ENCODE measurements at regions of chr14 and their contacts with region 1.

Region 1: DNA sequence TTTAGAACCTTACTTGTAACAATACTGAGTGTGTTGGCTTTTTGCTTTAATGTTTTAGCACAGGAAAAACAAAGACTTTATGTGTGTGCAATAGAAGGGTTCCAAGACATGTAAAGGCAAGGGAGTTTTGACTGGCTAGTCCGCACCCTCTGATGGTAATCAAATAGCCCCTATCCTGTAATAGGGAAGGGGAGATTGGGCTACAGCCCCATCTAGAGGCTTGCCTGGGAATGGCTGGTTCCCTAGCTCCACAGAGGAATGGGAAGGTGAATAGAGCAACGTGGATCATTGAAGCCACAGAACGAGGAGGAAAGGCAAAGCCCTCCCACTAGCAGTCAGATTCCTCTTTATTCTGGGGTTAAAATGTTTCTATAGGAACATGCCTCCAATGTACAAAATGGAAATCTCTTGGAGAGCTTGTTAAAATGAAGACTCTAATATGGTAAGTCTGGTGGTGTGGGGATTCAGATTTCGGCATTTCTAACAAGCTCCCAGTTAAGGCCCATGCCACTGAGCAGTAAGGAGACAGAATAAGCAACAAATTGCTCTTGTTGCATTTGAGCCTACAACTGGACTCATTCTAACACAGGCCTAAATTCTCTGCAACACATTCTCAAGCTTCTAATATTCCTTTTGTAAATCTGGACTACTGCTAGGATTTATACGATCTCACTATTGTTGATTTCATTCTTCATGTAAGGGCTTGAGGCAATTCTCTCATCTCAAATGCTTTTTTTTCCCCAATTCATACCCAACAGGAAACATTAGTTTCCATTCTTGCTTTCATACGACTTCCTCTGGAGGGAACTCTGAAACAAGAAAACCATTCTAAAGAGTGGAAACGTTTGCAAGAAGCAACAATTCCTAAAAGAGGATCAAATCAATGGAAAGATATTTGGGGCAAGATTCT is 57.1 kb downstream of the NIN start:
- DNase-seq: peak; percentile 29 to 64
- ATAC-seq: peak; percentile 67 to 80 (median 71)
- H3K4me3 ChIP-seq: no peak overlapping the region
- H3K27ac ChIP-seq: peak overlapping the region; percentile 48
- H3K4me1 ChIP-seq: peaks cover 40% of the 10 kb centered on the region
- H3K27me3 ChIP-seq: no peaks in the 10 kb centered on the region
- CTCF ChIP-seq: peak; percentile 75

Region 2: DNA sequence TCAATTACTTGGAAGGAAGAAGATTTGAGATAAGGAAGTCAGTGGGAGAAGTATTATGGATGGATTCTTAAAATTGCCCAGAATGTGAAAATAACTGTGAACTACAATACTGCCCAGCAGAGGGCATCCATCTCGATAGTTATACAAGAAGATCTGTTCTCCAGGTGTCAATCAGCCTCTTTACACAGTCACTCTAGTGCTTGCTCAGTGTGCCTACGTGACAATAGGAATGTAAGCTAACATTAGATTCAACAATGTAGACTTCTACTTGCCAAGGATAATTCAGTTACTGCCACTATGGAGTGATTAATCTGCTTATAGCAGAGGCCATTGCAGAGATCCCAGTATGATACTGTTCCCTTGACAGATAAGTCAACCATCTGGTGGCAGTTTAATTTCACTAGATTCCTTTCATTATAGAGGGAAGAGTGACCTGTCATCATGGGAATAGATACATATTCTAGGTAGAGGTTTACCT is 230.9 kb before region 1 on chr14:
- intact Hi-C with region 1: loop called (anchors 5 kb)
- DNase-seq: no peak
- ATAC-seq: peak; percentile 56 to 71 (median 66)
- H3K4me3 ChIP-seq: no peak overlapping the region
- H3K27ac ChIP-seq: peak overlapping the region; percentile 43
- H3K4me1 ChIP-seq: peaks cover 11% of the 10 kb centered on the region
- H3K27me3 ChIP-seq: no peaks in the 10 kb centered on the region
- CTCF ChIP-seq: peak; percentile 55

Region 3: DNA sequence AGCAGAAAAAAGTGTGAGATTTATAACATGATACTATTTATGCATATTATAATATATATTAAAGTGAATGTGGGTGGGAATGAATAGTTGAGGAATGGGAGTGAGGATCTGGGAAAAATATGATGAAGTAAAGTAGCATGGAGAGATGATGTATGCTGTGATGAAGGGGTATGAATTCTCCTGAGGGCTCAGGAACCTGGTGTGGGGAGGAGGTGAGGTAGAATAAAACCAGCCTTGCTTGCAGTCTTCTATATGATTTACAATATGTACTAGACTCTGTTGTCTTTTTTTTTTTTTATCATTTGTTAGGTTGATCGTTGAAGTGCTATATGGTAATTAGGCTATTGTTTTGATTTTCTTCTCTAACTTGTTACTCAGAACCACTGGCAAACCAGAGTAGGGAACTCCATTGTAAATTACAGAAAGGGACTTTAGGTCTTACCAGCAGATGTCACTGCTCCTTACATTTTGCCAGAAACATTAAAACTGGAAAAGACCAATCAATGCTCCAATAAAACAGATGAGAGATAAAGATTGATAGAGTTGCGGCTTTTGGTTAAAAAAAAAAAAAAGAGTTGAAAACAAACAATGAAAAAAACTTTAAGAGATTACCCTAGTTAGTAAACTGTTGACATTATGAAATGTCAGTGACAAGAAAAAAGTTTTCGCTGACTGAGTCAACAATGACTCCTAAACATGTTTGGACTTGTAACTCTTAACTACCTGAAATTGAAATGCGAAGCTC is 174.0 kb before region 1 on chr14:
- intact Hi-C with region 1: loop called (anchors 5 kb)
- DNase-seq: no peak
- ATAC-seq: peak in 2 of 4 donors; percentile 68 to 88
- H3K4me3 ChIP-seq: no peak overlapping the region
- H3K27ac ChIP-seq: no peak overlapping the region
- H3K4me1 ChIP-seq: no peaks in the 10 kb centered on the region
- H3K27me3 ChIP-seq: no peaks in the 10 kb centered on the region
- CTCF ChIP-seq: peak; percentile 53

Region 4: DNA sequence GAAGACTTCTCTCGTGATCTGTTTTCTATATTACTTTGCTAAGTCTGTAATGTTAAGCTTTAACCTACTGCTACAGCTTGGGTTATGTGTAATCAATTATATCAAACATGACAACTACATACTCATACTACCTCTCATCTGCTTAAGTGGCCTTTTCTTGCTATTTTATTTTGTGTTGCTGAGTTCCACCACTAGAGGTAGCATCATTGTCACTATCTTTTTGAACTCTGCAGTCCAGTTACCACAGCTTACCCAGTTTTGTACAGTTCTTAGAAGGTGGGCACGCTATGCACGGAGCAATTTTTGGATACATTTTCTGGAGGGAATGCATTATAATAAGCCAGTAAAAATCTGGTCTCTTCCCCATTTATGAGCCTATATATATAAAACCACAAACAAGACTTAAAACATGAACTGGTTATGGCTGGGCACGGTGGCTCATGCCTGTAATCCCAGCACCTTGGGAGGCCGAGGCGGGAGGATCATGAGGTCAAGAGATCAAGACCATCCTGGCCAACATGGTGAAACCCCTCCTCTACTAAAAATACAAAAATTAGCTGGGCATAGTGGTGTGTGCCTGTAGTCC is 154.2 kb before region 1 on chr14:
- intact Hi-C with region 1: loop called in 1 of 2 experiments (anchors 5 kb)
- DNase-seq: no peak
- ATAC-seq: peak in 3 of 4 donors; percentile 47 to 74 (median 49)
- H3K4me3 ChIP-seq: no peak overlapping the region
- H3K27ac ChIP-seq: no peak overlapping the region
- H3K4me1 ChIP-seq: no peaks in the 10 kb centered on the region
- H3K27me3 ChIP-seq: no peaks in the 10 kb centered on the region
- CTCF ChIP-seq: peak; percentile 56

Region 5: DNA sequence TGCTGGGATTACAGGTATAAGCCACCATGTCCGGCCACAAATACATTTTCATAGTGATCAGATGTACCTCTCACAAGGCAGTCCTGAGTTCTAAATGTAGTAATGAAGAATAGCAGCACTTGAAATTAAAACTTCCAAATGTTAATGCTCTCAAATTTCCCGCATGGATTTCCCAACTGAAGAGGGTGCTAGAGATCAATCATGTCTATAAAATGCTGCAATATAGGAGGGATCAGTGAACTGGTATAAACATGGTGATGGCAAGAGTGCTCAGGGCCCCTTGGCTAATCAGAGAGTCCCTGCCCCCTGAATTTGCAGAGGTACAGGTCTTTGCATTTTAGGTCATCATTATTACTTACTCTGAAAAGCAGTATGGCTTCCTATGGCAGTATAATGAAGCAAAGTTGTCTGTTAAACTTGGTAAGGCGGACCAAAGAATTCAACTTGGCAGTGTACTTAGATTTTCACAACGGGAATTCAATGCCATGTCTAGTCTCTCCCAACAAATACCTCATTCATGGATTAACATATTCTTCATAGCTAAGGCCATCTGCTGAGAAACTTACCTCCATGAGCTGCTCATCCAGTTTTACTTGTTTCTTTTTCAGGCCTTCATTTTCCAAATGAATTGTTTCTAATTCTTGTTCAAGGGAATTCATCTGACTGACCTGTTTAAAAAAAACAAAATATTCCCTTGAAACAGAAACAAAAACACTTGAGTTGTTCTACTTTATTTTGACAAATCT is 38.8 kb before region 1 on chr14:
- intact Hi-C with region 1: no loop called
- DNase-seq: no peak
- ATAC-seq: no peak
- H3K4me3 ChIP-seq: no peak overlapping the region
- H3K27ac ChIP-seq: peak overlapping the region; percentile 10
- H3K4me1 ChIP-seq: peaks cover 23% of the 10 kb centered on the region
- H3K27me3 ChIP-seq: no peaks in the 10 kb centered on the region
- CTCF ChIP-seq: no peak

Region 6: GRCh38 chr14:50860478-50861086 is 86.7 kb after region 1 on chr14:
- intact Hi-C with region 1: loop called in 1 of 2 experiments (anchors 5 kb)
- DNase-seq: peak; percentile 75 to 84
- ATAC-seq: peak; percentile 60 to 91 (median 76)
- H3K4me3 ChIP-seq: peak overlapping the region; percentile 77
- H3K27ac ChIP-seq: peak overlapping the region; percentile 83
- H3K4me1 ChIP-seq: peaks cover 20% of the 10 kb centered on the region
- H3K27me3 ChIP-seq: no peaks in the 10 kb centered on the region
- CTCF ChIP-seq: peak; percentile 83

Region 7: GRCh38 chr14:51167587-51168214 is 393.8 kb after region 1 on chr14:
- intact Hi-C with region 1: no loop called
- DNase-seq: no peak
- ATAC-seq: peak in 3 of 4 donors; percentile 56 to 81 (median 80)
- H3K4me3 ChIP-seq: no peak overlapping the region
- H3K27ac ChIP-seq: no peak overlapping the region
- H3K4me1 ChIP-seq: peaks cover 6% of the 10 kb centered on the region
- H3K27me3 ChIP-seq: no peaks in the 10 kb centered on the region
- CTCF ChIP-seq: no peak

Measured in psoas muscle (tissue), 8 donors.